ENCODE measurements at regions of chr14 and their contacts with region 1.

Region 1: GRCh38 chr14:57574617-57575303 is 81.1 kb upstream of the CCDC198 start:
- DNase-seq: no peak
- H3K4me3 ChIP-seq: no peak overlapping the region
- H3K27ac ChIP-seq: no peak overlapping the region
- H3K4me1 ChIP-seq: no peaks in the 10 kb centered on the region
- CTCF ChIP-seq: peak; percentile 44; the same call in 1 of the 2 replicates

Region 2: DNA sequence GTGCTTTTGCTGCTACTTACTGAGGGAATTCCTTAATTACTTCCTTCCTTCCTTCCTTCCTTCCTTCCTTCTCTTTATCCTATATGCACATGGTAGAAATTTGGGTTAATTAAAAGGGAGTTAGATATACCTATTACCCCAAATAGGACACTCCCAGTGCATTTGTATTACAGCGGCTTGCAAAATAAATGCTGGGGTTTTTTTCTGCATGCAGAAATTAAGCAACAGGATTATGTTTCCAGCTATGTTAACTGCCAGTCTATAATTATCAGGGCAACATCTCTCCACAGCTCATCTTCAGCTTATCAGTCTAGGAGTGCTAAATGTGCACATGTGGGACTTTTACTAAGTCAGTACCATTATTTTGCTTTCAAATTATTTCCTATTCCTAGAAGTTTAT is 424.0 kb after region 1 on chr14:
- CTCF ChIA-PET with region 1: no interaction called
- POLR2A ChIA-PET with region 1: interaction called, 16 read pairs
- intact Hi-C with region 1: no loop called
- DNase-seq: no peak
- H3K4me3 ChIP-seq: no peak overlapping the region
- H3K27ac ChIP-seq: no peak overlapping the region
- H3K4me1 ChIP-seq: no peaks in the 10 kb centered on the region
- CTCF ChIP-seq: no peak

Measured in OCI-LY7 (cell line).